Left cardiac atrium (tissue), 4 donors: ENCODE measurements at regions of chr13 and their contacts with region 1.

Region 1: GRCh38 chr13:42950181-42950580 is 41.9 kb downstream of the EPSTI1 start:
- DNase-seq: no peak
- ATAC-seq: no peak

Region 2: GRCh38 chr13:42649831-42650230 is 300.4 kb before region 1 on chr13:
- intact Hi-C with region 1: loop called in 1 of 2 experiments (anchors 10 kb)
- DNase-seq: no peak
- ATAC-seq: no peak

Region 3: GRCh38 chr13:42906258-42906657 is 43.9 kb before region 1 on chr13:
- intact Hi-C with region 1: no loop called
- DNase-seq: no peak
- ATAC-seq: no peak

Region 4: DNA sequence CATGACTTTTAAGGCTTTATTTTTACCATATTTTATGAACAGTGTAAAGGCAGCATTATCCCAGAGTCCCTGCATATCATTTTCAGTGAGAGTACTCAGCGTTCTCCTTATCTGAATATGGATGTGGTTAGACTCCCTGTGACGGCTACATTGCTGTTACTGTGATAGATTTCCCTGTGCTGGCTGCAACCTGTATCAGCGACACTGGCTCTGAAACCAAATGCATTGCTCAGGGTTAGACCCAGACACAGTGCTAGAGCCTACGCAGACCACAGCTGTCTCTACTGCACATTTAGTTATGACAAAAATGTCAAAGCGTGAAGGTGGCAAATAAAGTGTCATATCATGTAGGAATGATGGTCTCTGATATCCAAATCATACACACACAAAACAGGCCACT is 698.6 kb after region 1 on chr13:
- intact Hi-C with region 1: no loop called
- DNase-seq: no peak
- ATAC-seq: peak in 1 of 2 donors; percentile 33